Esophagus muscularis mucosa (tissue), 4 donors: ENCODE measurements at regions of chr3 and their contacts with region 1.

Region 1: DNA sequence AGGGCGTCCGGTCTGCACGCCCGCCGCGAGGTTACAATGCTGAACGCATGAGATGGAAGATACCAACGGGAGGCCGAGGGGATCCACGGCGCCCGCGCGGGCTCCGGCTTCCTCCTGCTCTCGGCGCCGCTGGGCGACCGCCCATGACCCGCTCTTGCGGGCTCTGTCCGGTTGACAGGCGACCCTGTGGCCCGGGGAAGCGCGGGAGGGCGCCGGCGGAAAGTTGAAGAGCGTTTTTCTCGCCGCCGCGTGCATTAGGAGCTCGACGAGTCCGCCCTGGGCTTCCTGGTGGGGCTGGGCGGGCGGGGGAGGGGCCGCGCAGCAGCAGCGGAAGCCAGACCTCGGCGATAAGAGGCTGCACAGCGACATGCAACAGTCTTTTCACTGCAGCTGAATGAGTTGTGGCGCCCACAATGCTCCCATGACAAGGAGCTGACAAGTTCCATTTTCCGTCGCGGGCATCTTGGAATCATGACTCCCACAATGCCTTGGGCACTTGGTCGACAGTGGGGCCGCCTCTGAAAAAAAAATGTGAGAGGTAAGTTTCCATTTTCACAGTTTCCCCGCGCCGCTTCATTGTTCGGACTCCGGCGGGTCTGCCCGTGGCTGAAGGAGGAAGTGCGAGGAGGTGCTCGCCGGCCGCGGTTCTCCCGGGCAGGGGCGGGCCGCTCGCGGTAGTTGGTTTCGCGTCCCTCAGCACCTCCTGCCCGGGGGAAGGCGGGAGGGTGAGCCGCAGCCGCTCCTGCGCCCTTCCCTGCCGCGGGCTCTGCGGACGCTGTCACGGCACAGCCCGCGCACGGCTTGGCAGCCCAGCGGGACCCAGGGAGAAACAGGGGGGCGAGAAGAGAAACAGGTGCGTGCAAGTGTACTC is at the start of gene MBNL1:
- DNase-seq: peak; percentile 95
- H3K4me3 ChIP-seq: peak within 1 kb of the TSS; percentile 68 to 90 (median 76)
- H3K27ac ChIP-seq: peak within 1 kb of the TSS; percentile 96 to 99 (median 98)
- H3K4me1 ChIP-seq: peaks cover 38 to 68% (median 55%) of the 10 kb centered on the region in 4 donors
- H3K27me3 ChIP-seq: no peaks in the 10 kb centered on the region
- CTCF ChIP-seq: peak in 1 of 3 experiments; percentile 5
- EP300 ChIP-seq: no peak
- POLR2A ChIP-seq: no peak
- total RNA-seq, gene MBNL1: 635 to 868 (median 720) TPM

Region 2: GRCh38 chr3:152205097-152205593 is 63.6 kb before region 1 on chr3:
- intact Hi-C with region 1: loop called (anchors 5 kb)
- DNase-seq: no peak
- H3K4me3 ChIP-seq: peak overlapping the region; percentile 38 to 50 (median 46)
- H3K27ac ChIP-seq: peak overlapping the region; percentile 82 to 84 (median 84)
- H3K4me1 ChIP-seq: peaks cover 8 to 64% (median 47%) of the 10 kb centered on the region in 4 donors
- H3K27me3 ChIP-seq: no peaks in the 10 kb centered on the region
- CTCF ChIP-seq: no peak
- EP300 ChIP-seq: no peak
- POLR2A ChIP-seq: no peak

Region 3: DNA sequence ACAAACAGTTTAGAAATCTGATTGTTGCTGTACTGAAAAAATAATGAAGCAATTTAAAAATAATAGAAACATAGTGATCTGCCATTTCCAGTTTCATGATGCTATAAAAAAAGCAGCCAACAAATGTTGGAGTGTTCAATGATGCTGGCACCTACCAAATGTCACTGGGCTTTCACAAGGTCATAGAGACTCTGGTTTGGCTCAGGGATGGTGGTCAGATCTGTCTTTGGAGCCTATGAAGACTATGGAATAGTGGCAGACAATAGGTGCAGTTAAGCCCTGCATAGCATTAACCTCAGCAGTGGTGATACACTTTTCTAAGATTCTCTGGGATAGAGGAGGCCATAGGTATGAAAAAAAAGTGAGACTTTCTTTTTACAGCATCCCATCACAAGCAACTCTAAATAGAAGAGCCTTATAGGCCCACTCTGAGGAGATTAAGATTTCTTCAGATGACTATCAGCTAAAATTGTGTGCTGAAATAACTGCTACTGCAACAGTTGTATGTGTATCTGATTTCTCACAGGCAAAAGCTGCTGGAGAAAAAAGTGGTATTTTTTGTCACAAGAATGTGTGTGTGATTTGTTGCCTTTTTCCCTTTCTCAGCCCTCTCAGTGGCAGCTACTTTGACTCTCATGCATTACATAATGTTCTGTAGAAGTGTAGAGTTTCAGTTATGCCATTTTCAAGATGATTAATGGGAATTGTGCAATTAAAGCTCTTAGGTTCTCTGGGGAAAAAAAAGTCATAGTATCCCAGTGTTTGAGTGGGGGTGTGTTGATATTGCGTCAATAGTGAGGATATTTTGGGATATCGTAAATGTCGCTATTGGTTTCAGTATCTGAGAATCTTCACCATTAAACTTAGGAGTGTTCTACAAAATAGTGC is 137.4 kb after region 1 on chr3:
- intact Hi-C with region 1: loop called (anchors 10 kb)
- DNase-seq: no peak
- H3K4me3 ChIP-seq: peak overlapping the region in 3 of 4 donors; percentile 2 to 36 (median 25)
- H3K27ac ChIP-seq: peak overlapping the region; percentile 73 to 82 (median 78)
- H3K4me1 ChIP-seq: peaks cover 50 to 94% (median 84%) of the 10 kb centered on the region in 4 donors
- H3K27me3 ChIP-seq: no peaks in the 10 kb centered on the region
- CTCF ChIP-seq: no peak
- EP300 ChIP-seq: no peak
- POLR2A ChIP-seq: no peak